ENCODE measurements at regions of chr14 and their contacts with region 1.

Region 1: GRCh38 chr14:91177073-91178034 is 63.5 kb downstream of the DGLUCY start:
- DNase-seq: peak; percentile 41
- ATAC-seq: peak; percentile 61
- H3K4me3 Mint-ChIP-seq: no peak overlapping the region
- H3K27ac Mint-ChIP-seq: no peak overlapping the region; the same call in 1 of the 2 replicates
- H3K4me1 Mint-ChIP-seq: no peaks in the 10 kb centered on the region
- H3K27me3 Mint-ChIP-seq: no peaks in the 10 kb centered on the region
- CTCF ChIP-seq: peak; percentile 75

Region 2: GRCh38 chr14:90903101-90903500 is 274.3 kb before region 1 on chr14:
- CTCF ChIA-PET with region 1: interaction called, 43 read pairs
- POLR2A ChIA-PET with region 1: no interaction called
- DNase-seq: peak; percentile 45
- ATAC-seq: peak; percentile 92
- H3K4me3 Mint-ChIP-seq: no peak overlapping the region
- H3K27ac Mint-ChIP-seq: no peak overlapping the region
- H3K4me1 Mint-ChIP-seq: peaks cover 8% of the 10 kb centered on the region
- H3K27me3 Mint-ChIP-seq: no peaks in the 10 kb centered on the region
- CTCF ChIP-seq: peak; percentile 40; the same call in 1 of the 2 replicates

Region 3: GRCh38 chr14:91138511-91139359 is 38.6 kb before region 1 on chr14:
- CTCF ChIA-PET with region 1: interaction called, 10 read pairs
- POLR2A ChIA-PET with region 1: no interaction called
- DNase-seq: peak; percentile 47
- ATAC-seq: peak; percentile 43
- H3K4me3 Mint-ChIP-seq: no peak overlapping the region
- H3K27ac Mint-ChIP-seq: peak overlapping the region; percentile 54; the same call in 1 of the 2 replicates
- H3K4me1 Mint-ChIP-seq: peaks cover 18% of the 10 kb centered on the region
- H3K27me3 Mint-ChIP-seq: no peaks in the 10 kb centered on the region
- CTCF ChIP-seq: peak; percentile 29

Region 4: GRCh38 chr14:91163316-91163715 is 14.0 kb before region 1 on chr14:
- CTCF ChIA-PET with region 1: interaction called, 10 read pairs
- POLR2A ChIA-PET with region 1: no interaction called
- DNase-seq: no peak
- ATAC-seq: no peak
- H3K4me3 Mint-ChIP-seq: no peak overlapping the region
- H3K27ac Mint-ChIP-seq: no peak overlapping the region
- H3K4me1 Mint-ChIP-seq: no peaks in the 10 kb centered on the region
- H3K27me3 Mint-ChIP-seq: no peaks in the 10 kb centered on the region
- CTCF ChIP-seq: no peak

Region 5: DNA sequence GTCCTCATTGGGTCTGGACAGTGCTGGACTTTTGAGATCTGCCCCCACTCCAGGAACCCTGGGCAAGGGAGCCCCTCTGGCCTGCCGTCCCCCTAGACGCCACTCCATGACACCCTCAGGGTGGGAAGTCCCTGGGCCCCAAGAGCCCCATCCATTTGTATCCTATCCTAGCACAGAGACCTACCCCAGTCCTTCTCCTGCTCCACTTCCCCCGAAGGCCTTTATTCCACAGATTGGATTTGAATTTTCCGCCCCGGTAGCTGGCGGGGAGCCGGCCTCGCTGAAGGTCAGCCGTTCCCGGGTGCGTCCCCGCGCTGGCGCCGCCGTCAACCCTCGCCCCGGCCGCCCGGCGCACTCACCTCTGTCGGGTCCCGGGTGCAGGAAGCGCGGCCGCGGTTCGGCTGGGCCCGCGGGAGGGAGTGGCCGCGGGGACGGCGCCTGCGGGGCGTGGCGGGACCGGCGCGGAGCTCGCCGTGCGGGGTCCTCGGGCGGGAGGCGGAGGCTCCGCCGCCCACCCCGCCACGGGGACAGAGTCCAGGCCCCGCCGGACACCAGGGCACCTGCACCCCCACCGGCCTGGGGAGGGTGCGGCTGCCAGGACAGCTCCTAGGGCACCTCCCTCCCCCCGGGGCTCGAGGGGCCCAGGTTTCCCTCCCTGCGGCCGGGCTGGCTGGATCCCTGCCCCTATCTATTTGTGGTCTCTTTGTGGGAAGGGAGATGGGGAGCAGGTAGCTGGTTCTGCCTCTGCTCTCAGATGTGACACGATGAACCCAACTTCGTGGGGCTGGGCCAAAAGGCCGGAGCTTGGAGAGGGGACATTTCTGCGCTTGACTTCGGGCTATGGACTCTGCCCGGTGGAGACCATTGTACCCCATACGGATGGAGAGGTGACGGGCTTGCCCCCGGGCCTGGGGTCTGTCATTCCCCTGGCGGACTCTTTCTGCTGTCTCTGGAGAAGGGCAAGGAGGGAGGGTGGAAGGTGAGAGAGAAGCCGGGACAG is 87.1 kb after region 1 on chr14:
- CTCF ChIA-PET with region 1: interaction called, 13 read pairs
- POLR2A ChIA-PET with region 1: no interaction called
- DNase-seq: peak; percentile 45
- ATAC-seq: peak; percentile 64
- H3K4me3 Mint-ChIP-seq: peak overlapping the region; percentile 82
- H3K27ac Mint-ChIP-seq: no peak overlapping the region
- H3K4me1 Mint-ChIP-seq: peaks cover 12% of the 10 kb centered on the region
- H3K27me3 Mint-ChIP-seq: peaks cover 35% of the 10 kb centered on the region
- CTCF ChIP-seq: no peak

Region 6: GRCh38 chr14:91453744-91454143 is 276.4 kb after region 1 on chr14:
- CTCF ChIA-PET with region 1: no interaction called
- POLR2A ChIA-PET with region 1: no interaction called
- DNase-seq: no peak
- ATAC-seq: peak; percentile 50
- H3K4me3 Mint-ChIP-seq: no peak overlapping the region
- H3K27ac Mint-ChIP-seq: no peak overlapping the region
- H3K4me1 Mint-ChIP-seq: peaks cover 15% of the 10 kb centered on the region
- H3K27me3 Mint-ChIP-seq: no peaks in the 10 kb centered on the region
- CTCF ChIP-seq: no peak

Measured in WTC11 (cell line).